Activated naive CD4-positive, alpha-beta T cell treated with anti-CD3 and anti-CD28 coated beads, Interleukin-2, amount 10 ng/mL, durations not matched to agents 7 days and 5 days (primary cell): ENCODE measurements at regions of chr19 and their contacts with region 1.

Region 1: GRCh38 chr19:45692187-45693105 is at the start of gene QPCTL:
- DNase-seq: peak; percentile 99
- H3K4me3 Mint-ChIP-seq: peak within 1 kb of the TSS; percentile 93
- H3K27ac Mint-ChIP-seq: peak within 1 kb of the TSS; percentile 92
- H3K4me1 Mint-ChIP-seq: peaks cover 26% of the 10 kb centered on the region
- H3K27me3 Mint-ChIP-seq: no peaks in the 10 kb centered on the region

Region 2: DNA sequence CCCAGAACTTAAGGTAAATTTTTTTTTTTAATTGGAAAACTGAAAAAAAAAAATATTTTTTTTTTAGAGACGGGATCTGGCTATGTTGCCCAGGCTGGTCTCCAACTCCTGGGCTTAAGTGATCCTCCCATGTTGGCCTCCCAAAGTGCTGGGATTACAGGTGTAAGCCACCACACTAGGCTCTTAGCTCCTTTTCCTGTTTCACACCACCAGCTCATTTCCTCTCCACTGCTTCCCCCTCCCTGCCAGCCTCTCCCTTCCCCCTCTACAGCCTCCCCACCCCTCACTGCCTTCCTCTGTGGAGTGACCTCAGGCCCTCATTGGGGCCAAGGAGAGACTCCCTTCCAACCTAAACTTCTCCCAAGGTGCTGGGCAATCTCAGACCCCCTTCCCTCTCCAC is 28.6 kb before region 1 on chr19:
- CTCF ChIA-PET with region 1: no interaction called
- DNase-seq: no peak
- H3K4me3 Mint-ChIP-seq: no peak overlapping the region
- H3K27ac Mint-ChIP-seq: no peak overlapping the region
- H3K4me1 Mint-ChIP-seq: peaks cover 26% of the 10 kb centered on the region
- H3K27me3 Mint-ChIP-seq: peaks cover 53% of the 10 kb centered on the region

Region 3: DNA sequence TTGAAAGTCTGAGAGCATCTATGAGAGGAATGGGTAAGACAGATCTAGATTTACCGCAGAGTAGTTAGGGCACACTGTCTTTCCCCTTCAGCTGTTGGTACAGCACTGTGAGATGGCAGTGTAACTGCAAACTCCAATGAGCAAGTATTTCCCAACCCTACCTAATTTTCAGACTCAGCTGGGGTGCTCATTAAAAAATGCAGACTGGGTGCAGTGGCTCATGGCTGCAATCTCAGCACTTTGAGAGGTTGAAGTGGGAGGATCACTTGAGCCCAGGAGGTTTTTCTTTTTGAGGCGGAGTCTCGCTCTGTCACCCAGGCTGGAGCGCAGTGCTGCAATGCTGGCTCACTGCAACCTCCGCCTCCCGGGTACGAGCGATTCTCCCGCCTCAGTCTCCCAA is 12.7 kb after region 1 on chr19:
- CTCF ChIA-PET with region 1: interaction called, 43 read pairs
- DNase-seq: no peak
- H3K4me3 Mint-ChIP-seq: no peak overlapping the region
- H3K27ac Mint-ChIP-seq: no peak overlapping the region
- H3K4me1 Mint-ChIP-seq: peaks cover 12% of the 10 kb centered on the region
- H3K27me3 Mint-ChIP-seq: no peaks in the 10 kb centered on the region